ENCODE measurements at regions of chr9 and their contacts with region 1.

Region 1: GRCh38 chr9:112750111-112750767 is at the start of gene SNX30:
- DNase-seq: peak; percentile 87
- H3K4me3 Mint-ChIP-seq: peak within 1 kb of the TSS; percentile 76
- H3K27ac Mint-ChIP-seq: peak within 1 kb of the TSS; percentile 78
- H3K4me1 Mint-ChIP-seq: peaks cover 56% of the 10 kb centered on the region
- H3K27me3 Mint-ChIP-seq: no peaks in the 10 kb centered on the region
- total RNA-seq, gene SNX30: 4.4 to 4.8 TPM

Region 2: GRCh38 chr9:112037281-112038016 is 712.8 kb before region 1 on chr9:
- CTCF ChIA-PET with region 1: no interaction called
- POLR2A ChIA-PET with region 1: no interaction called
- intact Hi-C with region 1: loop called (anchors 10 kb)
- DNase-seq: peak; percentile 86
- H3K4me3 Mint-ChIP-seq: peak overlapping the region; percentile 37
- H3K27ac Mint-ChIP-seq: peak overlapping the region; percentile 81
- H3K4me1 Mint-ChIP-seq: peaks cover 49% of the 10 kb centered on the region
- H3K27me3 Mint-ChIP-seq: peaks cover 18% of the 10 kb centered on the region

Region 3: DNA sequence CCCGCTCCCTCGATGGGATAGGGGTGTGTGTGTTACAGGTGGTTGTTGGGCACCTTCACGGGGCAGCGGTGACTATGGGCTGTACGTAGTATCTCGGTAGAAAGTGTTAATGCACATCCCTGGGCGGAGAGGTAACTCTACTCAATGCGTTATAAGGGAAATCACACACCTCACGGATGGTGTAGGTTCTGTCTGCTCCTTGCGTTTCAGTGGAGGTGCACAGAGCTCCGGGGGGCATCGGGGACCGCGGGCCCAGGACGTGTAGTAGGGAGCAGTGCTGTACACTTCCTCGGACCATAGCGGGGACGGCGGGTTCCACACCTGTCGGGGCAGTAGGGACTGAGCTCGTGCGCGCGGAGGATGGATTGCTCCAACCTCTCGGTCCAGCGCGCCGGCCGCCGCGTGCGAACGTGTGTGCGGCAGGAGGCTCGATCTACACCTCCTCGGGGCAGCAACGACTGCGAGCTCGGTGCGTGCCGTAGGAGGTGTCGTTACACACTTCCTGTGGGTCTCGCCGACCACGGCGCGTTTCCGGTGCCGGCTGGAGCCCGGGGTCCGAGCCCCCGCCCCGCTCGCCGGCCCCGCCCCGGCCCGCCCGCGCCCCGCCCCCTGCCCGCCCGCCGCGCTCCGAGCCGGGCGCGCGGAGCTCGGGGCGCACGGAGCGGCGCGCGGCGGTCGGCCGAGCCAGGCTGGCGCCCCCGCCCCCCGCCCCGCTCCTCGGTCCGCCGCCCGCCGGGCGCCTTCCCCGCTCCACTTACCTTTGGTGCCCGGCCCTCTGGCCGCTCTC is 263.8 kb before region 1 on chr9 and contains the start of gene KIAA1958:
- CTCF ChIA-PET with region 1: no interaction called
- POLR2A ChIA-PET with region 1: no interaction called
- intact Hi-C with region 1: loop called (anchors 5 kb)
- DNase-seq: peak; percentile 91
- H3K4me3 Mint-ChIP-seq: peak within 1 kb of the TSS; percentile 90
- H3K27ac Mint-ChIP-seq: peak within 1 kb of the TSS; percentile 81
- H3K4me1 Mint-ChIP-seq: peaks cover 22% of the 10 kb centered on the region
- H3K27me3 Mint-ChIP-seq: no peaks in the 10 kb centered on the region
- total RNA-seq, gene KIAA1958: 6.1 to 6.5 TPM

Region 4: GRCh38 chr9:112774006-112774996 is 24.1 kb after region 1 on chr9:
- CTCF ChIA-PET with region 1: no interaction called
- POLR2A ChIA-PET with region 1: no interaction called
- intact Hi-C with region 1: loop called (anchors 1 kb)
- DNase-seq: no peak
- H3K4me3 Mint-ChIP-seq: no peak overlapping the region
- H3K27ac Mint-ChIP-seq: no peak overlapping the region
- H3K4me1 Mint-ChIP-seq: peaks cover 39% of the 10 kb centered on the region
- H3K27me3 Mint-ChIP-seq: no peaks in the 10 kb centered on the region

Region 5: GRCh38 chr9:112921549-112921948 is 171.3 kb after region 1 on chr9:
- CTCF ChIA-PET with region 1: no interaction called
- POLR2A ChIA-PET with region 1: no interaction called
- intact Hi-C with region 1: no loop called
- DNase-seq: no peak
- H3K4me3 Mint-ChIP-seq: no peak overlapping the region
- H3K27ac Mint-ChIP-seq: no peak overlapping the region
- H3K4me1 Mint-ChIP-seq: no peaks in the 10 kb centered on the region
- H3K27me3 Mint-ChIP-seq: peaks cover 14% of the 10 kb centered on the region

Region 6: DNA sequence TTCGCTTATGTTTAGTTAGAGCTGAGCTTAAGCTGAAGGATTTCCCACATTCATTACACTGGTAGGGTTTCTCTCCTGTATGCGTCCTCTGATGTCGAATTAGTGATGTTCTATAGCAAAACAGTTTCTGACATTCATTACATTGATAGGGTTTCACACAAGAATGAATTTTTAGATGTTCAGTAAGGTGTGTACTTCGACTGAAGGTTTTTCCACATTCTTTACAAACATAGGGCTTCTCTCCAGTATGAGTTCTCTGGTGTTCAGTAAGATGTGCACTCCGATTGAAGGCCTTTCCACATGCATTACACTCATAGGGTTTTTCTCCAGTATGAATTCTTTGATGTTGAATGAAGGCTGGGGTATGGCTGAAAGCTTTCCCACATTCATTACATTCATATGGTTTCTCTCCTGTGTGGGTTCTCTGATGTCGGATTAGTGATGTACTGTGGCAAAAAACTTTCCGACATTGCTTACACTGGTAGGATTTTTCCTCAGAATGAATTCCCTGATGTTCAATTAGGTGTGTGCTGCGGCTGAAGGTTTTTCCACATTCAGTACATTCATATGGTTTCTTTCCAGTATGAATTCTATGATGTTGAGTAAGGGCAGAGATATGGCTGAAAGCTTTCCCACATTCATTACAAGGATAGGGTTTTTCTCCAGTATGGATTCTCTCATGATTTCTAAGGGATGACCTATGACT is 247.2 kb after region 1 on chr9:
- CTCF ChIA-PET with region 1: no interaction called
- POLR2A ChIA-PET with region 1: no interaction called
- intact Hi-C with region 1: no loop called
- DNase-seq: no peak
- H3K4me3 Mint-ChIP-seq: no peak overlapping the region
- H3K27ac Mint-ChIP-seq: no peak overlapping the region
- H3K4me1 Mint-ChIP-seq: no peaks in the 10 kb centered on the region
- H3K27me3 Mint-ChIP-seq: no peaks in the 10 kb centered on the region

Region 7: DNA sequence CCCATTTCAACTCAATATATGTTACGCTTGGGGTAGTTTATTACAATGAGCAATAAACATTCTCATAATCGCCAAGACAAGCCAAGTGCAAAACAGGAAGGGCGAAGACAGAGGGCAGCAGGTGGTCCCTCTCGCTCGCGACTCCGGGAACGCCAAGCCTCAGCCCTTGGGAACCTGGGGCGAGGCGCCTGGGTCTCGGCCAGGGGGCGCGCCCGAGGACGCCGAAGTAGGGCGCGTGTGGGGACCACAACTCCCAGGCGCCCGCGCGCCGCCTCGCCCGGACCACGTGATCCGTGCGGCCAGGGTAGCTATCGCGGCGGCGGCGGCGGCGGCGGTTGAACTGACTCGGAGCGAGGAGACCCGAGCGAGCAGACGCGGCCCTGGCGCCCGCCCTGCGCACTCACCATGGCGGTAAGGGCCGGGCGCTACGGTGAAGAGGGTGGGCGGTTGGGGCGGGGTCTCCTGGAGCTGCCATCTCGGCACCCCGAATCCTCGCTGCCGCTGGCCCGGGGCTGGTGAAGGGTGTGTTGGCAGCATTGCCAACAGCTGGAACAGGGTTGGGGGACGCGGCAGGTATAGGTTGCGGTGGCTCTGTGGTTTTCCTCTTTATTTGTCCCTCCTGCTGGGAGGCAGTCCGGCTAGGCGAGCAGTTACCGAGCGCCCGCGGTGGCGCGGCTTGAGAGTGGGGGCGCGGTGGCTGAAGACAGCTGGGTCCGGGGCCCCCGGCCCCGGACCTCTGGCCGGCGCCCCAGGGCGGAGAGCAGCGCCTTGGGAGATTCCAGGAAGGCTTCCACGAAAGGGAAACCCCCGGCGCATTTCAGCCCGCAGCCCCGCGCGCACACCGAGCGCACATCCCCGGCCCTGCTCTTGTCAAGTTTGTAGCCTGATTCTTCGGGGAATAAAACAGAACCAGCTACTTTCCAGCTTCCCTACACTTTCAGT is 400.7 kb after region 1 on chr9 and contains the start of gene SLC31A2:
- CTCF ChIA-PET with region 1: no interaction called
- POLR2A ChIA-PET with region 1: no interaction called
- intact Hi-C with region 1: loop called (anchors 10 kb)
- DNase-seq: peak; percentile 91
- H3K4me3 Mint-ChIP-seq: peak within 1 kb of the TSS; percentile 80
- H3K27ac Mint-ChIP-seq: peak within 1 kb of the TSS; percentile 64
- H3K4me1 Mint-ChIP-seq: peaks cover 27% of the 10 kb centered on the region
- H3K27me3 Mint-ChIP-seq: no peaks in the 10 kb centered on the region
- total RNA-seq, gene SLC31A2: 5.1 to 6.7 TPM

Region 8: DNA sequence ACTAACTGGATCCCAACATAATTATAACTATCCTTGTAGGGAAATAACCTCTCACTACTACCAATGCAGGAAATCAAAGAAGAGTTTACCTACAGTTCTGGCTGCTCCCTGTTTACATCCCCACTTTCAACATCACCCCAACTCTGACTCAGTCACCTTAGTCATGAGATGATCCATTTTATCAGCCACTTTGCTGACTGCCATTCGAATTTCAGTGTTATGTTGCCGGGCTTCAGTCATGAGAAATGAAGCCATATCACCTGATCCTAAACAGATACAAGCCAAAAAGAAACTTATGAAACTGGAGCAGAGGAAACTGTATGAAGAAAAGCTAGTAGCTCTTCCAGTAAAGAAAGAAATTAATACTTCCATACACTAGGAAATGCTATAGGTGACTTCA is 434.3 kb after region 1 on chr9:
- CTCF ChIA-PET with region 1: no interaction called
- POLR2A ChIA-PET with region 1: no interaction called
- intact Hi-C with region 1: no loop called
- DNase-seq: no peak
- H3K4me3 Mint-ChIP-seq: no peak overlapping the region
- H3K27ac Mint-ChIP-seq: no peak overlapping the region
- H3K4me1 Mint-ChIP-seq: no peaks in the 10 kb centered on the region
- H3K27me3 Mint-ChIP-seq: no peaks in the 10 kb centered on the region

Measured in activated CD4-positive, alpha-beta memory T cell treated with anti-CD3 and anti-CD28 coated beads for 36 hours (primary cell).